Posterior cingulate gyrus (tissue), 11 donors: ENCODE measurements at regions of chr18 and their contacts with region 1.

Region 1: DNA sequence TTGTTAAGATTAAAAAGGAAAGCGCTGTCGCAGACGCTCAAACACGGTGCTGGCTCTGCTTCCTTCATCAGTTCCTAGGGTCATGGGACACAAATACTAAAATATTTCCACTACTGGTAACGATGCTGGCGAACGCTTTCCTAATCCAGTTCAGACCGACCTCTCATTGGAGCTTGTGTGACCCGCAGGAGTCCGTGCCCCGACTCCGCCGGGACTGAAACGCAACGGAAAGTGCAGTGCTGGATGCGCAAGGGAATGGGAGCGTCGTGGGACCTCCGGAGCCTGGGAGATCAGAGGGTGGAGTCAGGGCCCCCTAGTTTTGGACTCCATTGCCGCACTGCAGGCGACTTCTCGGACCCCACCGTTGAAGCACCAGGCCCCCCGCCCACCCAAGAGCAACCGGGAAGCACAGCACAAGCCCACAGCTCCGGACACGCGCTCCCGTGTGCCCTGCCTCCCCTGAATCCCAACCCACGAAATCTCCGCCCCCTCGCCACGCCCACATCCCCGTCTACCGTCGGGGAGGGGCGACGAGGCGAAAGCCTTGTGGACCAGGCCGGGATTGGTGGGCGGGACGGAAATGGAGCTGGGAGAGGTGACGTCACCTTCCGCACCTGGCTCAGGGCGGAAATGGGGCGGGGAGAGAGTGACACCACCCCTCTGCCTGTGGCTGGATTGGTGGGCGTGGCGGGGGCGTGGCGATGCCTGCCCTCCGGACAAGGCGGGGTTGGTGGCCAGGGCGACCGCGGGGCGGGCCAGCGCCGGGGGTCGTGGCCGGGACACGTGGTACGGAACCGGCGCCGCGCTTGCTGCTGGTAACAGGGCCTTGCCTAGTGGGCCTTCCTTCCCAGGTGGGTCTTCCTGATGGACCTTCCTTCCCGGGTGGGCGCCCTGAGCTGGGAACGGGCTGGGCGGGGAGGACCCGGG is at the start of gene CNDP2:
- DNase-seq: peak; percentile 99 to 100 (median 100)

Region 2: DNA sequence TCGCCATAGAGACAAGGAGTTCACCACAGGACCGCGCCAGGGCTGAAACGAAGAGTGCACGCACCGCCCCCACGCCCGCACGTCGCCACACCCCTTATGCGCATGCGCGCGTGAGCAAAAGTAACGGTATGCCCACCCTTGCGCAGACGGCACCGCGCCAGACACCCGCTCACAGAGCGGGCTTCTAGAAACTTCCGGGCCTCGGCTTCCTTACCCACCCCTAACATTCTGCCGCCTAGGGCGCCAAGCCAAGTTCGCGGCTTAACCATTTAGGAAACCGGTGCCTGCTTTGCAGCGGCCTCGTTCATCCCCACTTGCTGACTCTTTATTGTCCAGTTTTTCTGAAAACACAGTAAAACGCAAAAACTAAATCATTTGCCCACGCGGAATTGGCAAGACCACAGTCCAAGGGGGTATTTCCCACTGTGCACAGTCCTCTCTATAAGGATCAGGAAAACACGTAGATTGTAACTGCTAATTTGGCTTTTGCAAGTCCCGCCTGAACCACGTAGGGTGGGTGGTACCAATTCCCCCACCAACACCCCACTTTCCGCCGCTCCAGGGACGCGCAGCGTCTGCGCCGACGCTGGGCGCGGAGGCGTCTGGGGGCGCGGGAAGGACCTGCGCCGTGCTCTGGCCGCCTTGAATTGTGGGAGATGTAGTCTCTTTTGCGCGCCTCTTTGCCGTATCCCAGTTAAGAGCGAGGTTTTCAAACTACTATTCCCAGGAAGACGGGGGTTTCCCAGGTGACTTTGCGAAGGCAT is 347.9 kb before region 1 on chr18 and contains the starts of genes FBXO15 and TIMM21:
- intact Hi-C with region 1: loop called (anchors 5 kb)
- DNase-seq: peak; percentile 91 to 99 (median 95)

Region 3: DNA sequence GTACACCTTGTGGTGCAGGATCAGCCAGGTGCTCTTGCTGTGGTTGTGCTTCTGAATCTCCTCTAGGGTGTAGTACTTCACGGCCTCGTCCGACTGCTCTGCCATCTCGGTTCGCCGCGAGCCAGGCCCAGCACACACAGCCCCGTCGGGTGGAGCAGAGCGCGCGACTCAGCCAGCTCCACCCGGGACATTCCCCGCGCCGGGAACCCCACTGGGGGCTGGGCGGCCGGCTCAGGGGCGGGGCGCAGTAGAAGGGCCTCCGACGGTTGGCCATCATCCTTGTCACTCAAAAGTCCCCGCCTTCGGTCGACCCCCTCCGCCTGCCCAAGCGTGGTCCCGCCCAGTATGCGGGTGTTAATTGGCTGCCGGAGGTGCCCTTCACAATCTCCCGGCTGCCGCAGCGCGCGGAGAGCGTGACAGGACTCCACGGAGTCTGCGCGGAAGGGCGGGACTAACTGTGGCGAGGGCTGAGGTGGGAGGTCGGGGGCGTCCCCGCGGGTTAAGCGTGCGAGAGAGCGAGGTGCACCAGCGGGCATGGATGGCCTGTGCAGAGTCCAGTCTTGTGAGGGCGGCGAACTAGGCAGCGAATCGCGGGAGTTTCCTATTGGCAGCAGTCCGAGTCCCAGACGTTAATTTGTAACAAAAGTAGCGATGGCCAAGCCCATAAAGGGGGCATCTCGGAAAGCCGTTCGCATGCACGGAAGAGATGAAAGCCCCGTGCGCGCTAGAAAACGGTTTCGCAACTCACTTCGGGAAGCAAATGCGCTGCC is 203.9 kb before region 1 on chr18 and contains the start of gene CYB5A:
- intact Hi-C with region 1: loop called (anchors 10 kb)
- DNase-seq: peak; percentile 99 to 100 (median 100)

Region 4: DNA sequence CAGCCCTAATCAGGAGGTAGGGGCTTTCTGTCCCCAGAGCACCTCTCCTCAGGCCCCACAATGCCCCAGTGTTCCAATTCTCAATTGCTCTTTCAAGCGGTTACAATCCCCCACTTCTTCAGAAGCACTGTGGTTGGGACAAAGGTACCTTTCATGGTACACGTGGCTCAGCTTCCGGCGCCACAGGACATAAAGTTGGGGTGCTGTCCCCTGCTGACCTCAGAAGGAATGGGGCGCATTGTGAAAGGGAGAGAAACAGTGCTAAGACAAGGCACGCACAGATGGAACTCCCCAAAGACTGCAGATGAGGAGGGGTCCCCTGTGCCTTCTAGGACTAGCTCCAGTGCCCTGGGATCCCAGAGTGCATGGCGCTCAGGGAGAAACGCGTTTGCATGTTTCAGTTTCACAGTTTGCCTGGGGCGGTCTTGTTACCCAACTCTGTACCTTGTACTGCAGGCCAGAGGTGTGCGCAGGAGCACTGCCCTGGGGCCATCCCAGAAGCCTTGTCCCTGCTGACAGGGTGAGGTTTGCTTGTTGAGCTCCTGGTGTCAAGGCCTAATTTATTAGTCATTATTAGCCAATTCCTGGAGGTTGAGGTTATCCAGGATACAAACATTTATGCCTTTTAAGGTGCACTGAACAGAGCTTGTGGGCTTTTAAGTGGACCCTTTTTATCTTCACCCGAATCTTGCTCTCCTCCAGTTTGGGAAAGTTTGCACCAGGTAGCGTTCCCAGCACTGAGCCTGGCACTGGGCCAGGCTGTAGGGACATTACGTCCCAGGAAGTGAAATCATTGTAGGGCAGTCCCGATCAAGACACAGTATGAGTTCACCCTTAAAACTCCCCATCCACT is 46.1 kb after region 1 on chr18:
- intact Hi-C with region 1: loop called (anchors 5 kb)
- DNase-seq: peak in 9 of 10 donors; percentile 33 to 94 (median 73)

Region 5: DNA sequence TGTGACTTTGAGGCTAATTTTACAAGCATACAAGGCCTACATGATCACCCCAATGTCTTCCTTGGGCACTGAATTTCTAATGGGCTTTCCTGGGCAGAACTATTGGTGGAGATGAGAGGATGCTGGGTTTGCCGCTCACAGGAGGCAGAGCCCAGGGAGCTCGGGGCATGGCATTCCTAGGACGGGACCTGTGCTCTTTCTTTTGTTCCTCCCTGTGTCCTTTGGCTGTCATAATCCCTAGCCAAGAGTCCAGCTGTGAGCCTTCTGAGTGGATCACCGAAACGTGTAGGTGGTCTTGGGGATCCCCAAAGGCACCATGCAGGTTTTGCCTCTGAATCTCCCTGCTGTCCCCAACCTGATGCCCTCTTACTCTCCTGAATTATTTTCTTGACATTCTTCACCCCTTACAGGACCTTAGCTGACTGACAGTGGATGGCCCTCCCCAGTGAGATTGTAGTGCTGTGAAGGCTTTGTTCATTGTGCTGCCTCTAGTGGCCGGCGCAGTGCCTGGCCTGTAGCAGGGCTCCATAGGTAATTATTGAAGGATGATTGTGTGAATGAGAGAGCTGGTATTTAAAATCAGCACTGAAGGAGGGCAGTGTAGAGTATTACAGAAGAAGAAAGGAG is 323.7 kb after region 1 on chr18:
- intact Hi-C with region 1: no loop called
- DNase-seq: peak in 1 of 10 donors; percentile 75